Panc1 (cell line): ENCODE measurements at regions of chr16 and their contacts with region 1.

Region 1: DNA sequence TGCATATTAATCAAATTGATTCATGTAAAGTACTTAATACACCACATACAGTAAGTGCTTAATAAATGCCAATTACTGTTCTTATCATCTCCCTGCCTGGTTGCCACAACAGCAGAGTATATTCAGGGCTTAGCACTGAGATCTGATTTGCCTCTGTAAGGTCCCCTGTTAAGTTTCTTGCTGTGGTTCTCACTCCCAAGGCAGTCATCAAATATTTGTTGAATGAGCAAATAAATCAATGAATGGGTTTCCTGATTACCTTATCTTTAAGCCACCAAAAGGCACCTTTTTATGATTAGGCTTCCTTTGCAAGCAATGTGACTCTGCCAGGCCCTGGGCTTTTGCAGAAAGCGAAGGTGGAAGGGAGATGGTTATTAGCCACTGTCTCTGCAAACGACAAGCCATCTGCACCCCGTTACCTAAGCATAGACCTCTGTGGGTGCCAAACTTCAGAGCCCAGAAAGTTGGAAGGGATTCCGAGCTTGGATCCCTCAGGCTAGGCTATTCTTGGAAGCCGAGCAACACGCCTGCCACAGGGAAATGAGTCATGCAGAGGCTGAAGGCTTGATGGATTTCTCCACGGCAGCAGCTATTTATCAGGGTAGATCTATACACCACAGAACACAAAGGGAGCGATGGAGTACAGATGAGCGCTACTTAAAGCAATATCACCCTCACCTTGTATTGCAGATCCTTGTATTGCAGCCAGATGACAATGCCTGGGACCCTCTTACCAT is 102.0 kb downstream of the GRIN2A start:
- DNase-seq: peak; percentile 38
- ATAC-seq: peak; percentile 96
- H3K4me3 ChIP-seq: peak overlapping the region in 1 of 2 experiments; percentile 43; a peak in 2 of 4 replicates
- H3K27ac ChIP-seq: peak overlapping the region; percentile 83
- H3K4me1 ChIP-seq: peaks cover 54% of the 10 kb centered on the region
- H3K27me3 ChIP-seq: no peaks in the 10 kb centered on the region
- CTCF ChIP-seq: no peak

Region 2: DNA sequence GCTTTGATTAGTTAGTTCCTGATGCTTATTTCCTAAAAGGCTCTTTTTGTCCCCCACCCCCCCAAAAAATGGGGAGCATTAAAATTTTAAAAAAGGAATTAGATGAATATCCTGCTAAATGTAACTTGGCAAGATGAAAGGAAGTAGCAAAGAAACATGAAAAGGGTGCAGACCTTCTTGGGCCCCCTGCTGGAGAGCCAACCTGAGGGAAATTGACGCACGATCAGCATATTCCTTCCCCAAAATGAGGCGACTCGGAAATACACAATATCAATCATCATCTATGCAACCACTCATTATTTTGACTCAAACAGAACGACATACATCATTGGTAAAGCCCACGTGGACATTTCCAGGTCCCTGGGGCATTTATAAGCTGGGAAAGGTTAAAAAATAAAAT is 42.3 kb after region 1 on chr16:
- CTCF ChIA-PET with region 1: no interaction called
- POLR2A ChIA-PET with region 1: no interaction called
- in situ Hi-C with region 1: no loop called
- intact Hi-C with region 1: loop called (anchors 5 kb)
- DNase-seq: no peak
- ATAC-seq: no peak
- H3K4me3 ChIP-seq: peak overlapping the region in 1 of 2 experiments; percentile 44; a peak in 2 of 4 replicates
- H3K27ac ChIP-seq: peak overlapping the region; percentile 75
- H3K4me1 ChIP-seq: peaks cover 42% of the 10 kb centered on the region
- H3K27me3 ChIP-seq: no peaks in the 10 kb centered on the region
- CTCF ChIP-seq: peak; percentile 77